ENCODE measurements at regions of chr2 and their contacts with region 1.

Region 1: DNA sequence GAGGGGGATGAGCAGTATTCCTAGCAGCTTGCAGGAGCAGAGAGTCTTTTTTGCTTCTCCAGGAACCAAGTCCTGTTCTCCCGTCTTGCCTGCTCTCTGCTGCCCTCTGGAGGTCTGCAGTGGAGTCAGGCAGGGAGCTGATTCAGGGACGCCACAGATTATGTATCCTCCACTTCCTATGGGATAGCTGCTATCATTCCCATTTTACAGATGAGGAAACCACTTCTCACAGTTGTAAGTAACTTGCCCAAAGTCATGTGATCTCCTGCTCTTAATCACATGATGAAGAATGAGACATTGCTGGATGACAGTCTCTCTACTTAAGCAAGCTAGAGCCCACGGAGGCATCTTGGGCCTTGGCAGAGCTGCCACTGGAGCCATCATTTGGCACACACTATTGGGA is 8.3 kb downstream of the SLC4A5 start:
- DNase-seq: peak; percentile 36 to 81 (median 67)
- ATAC-seq: peak; percentile 90
- H3K4me3 ChIP-seq: no peak overlapping the region
- H3K4me3 Mint-ChIP-seq: no peak overlapping the region
- H3K27ac ChIP-seq: no peak overlapping the region
- H3K27ac Mint-ChIP-seq: peak overlapping the region in 2 of 9 donors; percentile 62 to 77
- H3K4me1 ChIP-seq: peaks cover 0 to 5% of the 10 kb centered on the region in 2 donors
- H3K4me1 Mint-ChIP-seq: peaks cover 0 to 14% (median 4%) of the 10 kb centered on the region in 7 donors
- H3K27me3 ChIP-seq: no peaks in the 10 kb centered on the region
- H3K27me3 Mint-ChIP-seq: peaks cover 0 to 2% (median 0%) of the 10 kb centered on the region in 5 donors

Region 2: GRCh38 chr2:72689579-72690195 is 1645.2 kb before region 1 on chr2:
- CTCF ChIA-PET with region 1: no interaction called
- POLR2A ChIA-PET with region 1: no interaction called
- intact Hi-C with region 1: no loop called
- DNase-seq: no peak
- ATAC-seq: no peak
- H3K4me3 ChIP-seq: no peak overlapping the region
- H3K4me3 Mint-ChIP-seq: no peak overlapping the region
- H3K27ac ChIP-seq: no peak overlapping the region
- H3K27ac Mint-ChIP-seq: no peak overlapping the region
- H3K4me1 ChIP-seq: no peaks in the 10 kb centered on the region
- H3K4me1 Mint-ChIP-seq: peaks cover 0 to 9% (median 0%) of the 10 kb centered on the region in 7 donors
- H3K27me3 ChIP-seq: no peaks in the 10 kb centered on the region
- H3K27me3 Mint-ChIP-seq: no peaks in the 10 kb centered on the region

Region 3: GRCh38 chr2:74321737-74322136 is 13.2 kb before region 1 on chr2:
- CTCF ChIA-PET with region 1: interaction called, 19 read pairs
- POLR2A ChIA-PET with region 1: no interaction called
- intact Hi-C with region 1: no loop called
- DNase-seq: no peak
- ATAC-seq: no peak
- H3K4me3 ChIP-seq: no peak overlapping the region
- H3K4me3 Mint-ChIP-seq: no peak overlapping the region
- H3K27ac ChIP-seq: no peak overlapping the region
- H3K27ac Mint-ChIP-seq: no peak overlapping the region
- H3K4me1 ChIP-seq: no peaks in the 10 kb centered on the region
- H3K4me1 Mint-ChIP-seq: peaks cover 0 to 4% (median 0%) of the 10 kb centered on the region in 7 donors
- H3K27me3 ChIP-seq: no peaks in the 10 kb centered on the region
- H3K27me3 Mint-ChIP-seq: peaks cover 0 to 7% (median 0%) of the 10 kb centered on the region in 5 donors

Region 4: GRCh38 chr2:74357627-74358026 is 22.7 kb after region 1 on chr2:
- CTCF ChIA-PET with region 1: interaction called, 11 read pairs
- POLR2A ChIA-PET with region 1: no interaction called
- intact Hi-C with region 1: no loop called
- DNase-seq: no peak
- ATAC-seq: no peak
- H3K4me3 ChIP-seq: no peak overlapping the region
- H3K4me3 Mint-ChIP-seq: no peak overlapping the region
- H3K27ac ChIP-seq: no peak overlapping the region
- H3K27ac Mint-ChIP-seq: no peak overlapping the region
- H3K4me1 ChIP-seq: no peaks in the 10 kb centered on the region
- H3K4me1 Mint-ChIP-seq: peaks cover 0 to 2% (median 0%) of the 10 kb centered on the region in 7 donors
- H3K27me3 ChIP-seq: no peaks in the 10 kb centered on the region
- H3K27me3 Mint-ChIP-seq: no peaks in the 10 kb centered on the region